Naive thymus-derived CD4-positive, alpha-beta T cell (primary cell): ENCODE measurements at regions of chr1 and their contacts with region 1.

Region 1: DNA sequence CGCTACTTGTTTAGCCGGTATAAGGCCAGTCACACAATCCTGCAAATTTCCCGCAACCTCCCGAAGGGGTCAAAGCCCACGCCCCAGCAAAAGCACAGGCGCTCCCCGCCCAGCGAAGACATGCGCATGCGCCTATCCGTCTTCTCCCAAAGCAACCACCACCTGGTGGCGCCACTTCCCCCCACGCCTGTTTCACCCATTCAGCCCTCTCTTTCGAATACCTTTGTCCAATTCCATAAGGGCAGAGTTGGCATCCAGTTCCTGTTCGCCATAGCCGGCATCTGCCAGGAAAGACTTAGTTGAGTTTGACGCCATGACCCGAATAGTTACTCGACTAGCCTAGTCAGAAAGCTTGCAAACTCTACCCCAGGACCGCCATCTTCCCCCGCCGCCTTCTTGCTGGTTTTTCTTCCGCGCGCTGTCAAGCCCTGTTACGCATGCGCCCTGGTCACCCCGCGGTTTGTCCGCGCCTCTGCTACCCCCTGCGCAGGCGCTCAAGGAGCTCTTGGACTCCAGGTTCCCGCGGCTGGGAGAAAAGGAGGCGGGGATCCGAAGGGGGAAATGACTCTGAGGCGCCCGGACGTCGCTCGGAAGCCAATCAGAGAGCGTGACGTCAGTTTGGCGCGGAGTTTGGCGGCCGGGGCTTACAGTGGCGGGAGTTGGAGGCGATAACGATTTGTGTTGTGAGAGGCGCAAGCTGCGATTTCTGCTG is at the starts of genes DTL and INTS7:
- DNase-seq: peak; percentile 94 to 99 (median 99)
- ATAC-seq: peak; percentile 93
- H3K4me3 ChIP-seq: peak within 1 kb of the TSS; percentile 99
- H3K4me3 Mint-ChIP-seq: peak within 1 kb of the TSS; percentile 86 to 100 (median 98)
- H3K27ac ChIP-seq: peak within 1 kb of the TSS; percentile 70
- H3K27ac Mint-ChIP-seq: peak within 1 kb of the TSS; percentile 95 to 99 (median 98)
- H3K4me1 ChIP-seq: peaks cover 20 to 23% of the 10 kb centered on the region in 2 donors
- H3K4me1 Mint-ChIP-seq: peaks cover 18 to 68% (median 54%) of the 10 kb centered on the region in 7 donors
- H3K27me3 ChIP-seq: no peaks in the 10 kb centered on the region
- H3K27me3 Mint-ChIP-seq: peaks cover 0 to 5% (median 0%) of the 10 kb centered on the region in 5 donors
- total RNA-seq, gene DTL: 0.27 to 63.0 (median 0.78) TPM
- total RNA-seq, gene INTS7: 7.3 to 33.5 (median 8.6) TPM

Region 2: GRCh38 chr1:211675230-211676105 is 359.8 kb before region 1 on chr1 and contains the start of gene NEK2:
- CTCF ChIA-PET with region 1: interaction called, 6 read pairs
- POLR2A ChIA-PET with region 1: no interaction called
- intact Hi-C with region 1: loop called (anchors 1 kb)
- DNase-seq: peak; percentile 53 to 90 (median 85)
- ATAC-seq: peak; percentile 97
- H3K4me3 ChIP-seq: peak within 1 kb of the TSS; percentile 76
- H3K4me3 Mint-ChIP-seq: peak within 1 kb of the TSS; percentile 88 to 96 (median 92)
- H3K27ac ChIP-seq: peak within 1 kb of the TSS; percentile 56
- H3K27ac Mint-ChIP-seq: peak within 1 kb of the TSS; percentile 45 to 88 (median 80)
- H3K4me1 ChIP-seq: peaks cover 5 to 7% of the 10 kb centered on the region in 2 donors
- H3K4me1 Mint-ChIP-seq: peaks cover 8 to 38% (median 13%) of the 10 kb centered on the region in 7 donors
- H3K27me3 ChIP-seq: no peaks in the 10 kb centered on the region
- H3K27me3 Mint-ChIP-seq: no peaks in the 10 kb centered on the region
- total RNA-seq, gene NEK2: 0.16 to 26.5 (median 0.25) TPM in 4 of 5 experiments, not detected in the other

Region 3: DNA sequence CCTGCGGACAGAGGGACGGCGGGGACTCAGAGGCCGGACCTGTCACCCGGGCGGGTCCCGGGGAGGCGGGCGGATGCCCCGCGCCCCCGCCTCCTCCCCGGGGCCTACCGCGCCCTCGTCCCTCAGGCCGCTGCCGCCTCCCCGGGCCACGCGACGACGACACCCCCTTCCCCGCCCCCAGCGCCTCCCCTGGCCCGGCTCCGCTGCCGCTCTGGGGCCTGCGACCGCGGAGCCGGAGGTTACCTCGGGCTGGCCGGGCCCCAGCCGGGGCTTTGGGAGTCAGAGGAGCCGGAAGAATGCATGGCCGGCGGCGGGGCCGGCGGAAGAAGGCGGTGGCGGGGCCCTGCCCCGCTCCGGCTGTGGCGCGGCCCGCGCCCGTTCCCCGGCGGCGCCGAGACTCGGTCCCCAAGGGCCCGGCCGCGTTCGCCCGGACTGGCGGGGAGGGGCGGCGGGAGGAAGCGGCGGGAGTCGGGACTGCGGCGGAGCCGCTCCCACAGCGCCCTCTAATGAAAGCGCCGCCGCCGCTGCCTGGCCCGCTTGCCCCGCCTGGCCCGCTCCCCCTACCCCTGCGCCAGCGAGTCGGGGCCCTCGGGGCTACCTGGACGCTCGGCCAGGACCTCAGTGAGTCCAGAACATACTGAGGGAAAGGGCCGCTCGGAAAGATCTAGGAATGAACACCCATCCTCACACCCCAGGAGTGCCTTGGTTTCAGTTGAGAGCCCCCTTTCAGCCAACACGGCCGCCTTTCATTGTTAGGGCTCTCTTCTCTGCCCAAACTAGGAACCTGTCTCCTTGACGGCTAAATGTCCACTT is 204.7 kb before region 1 on chr1 and contains the start of gene LPGAT1:
- CTCF ChIA-PET with region 1: no interaction called
- POLR2A ChIA-PET with region 1: no interaction called
- intact Hi-C with region 1: loop called (anchors 1 to 5 kb)
- DNase-seq: peak; percentile 28 to 81 (median 54)
- ATAC-seq: peak; percentile 92
- H3K4me3 ChIP-seq: peak within 1 kb of the TSS; percentile 68
- H3K4me3 Mint-ChIP-seq: peak within 1 kb of the TSS; percentile 88 to 97 (median 90)
- H3K27ac ChIP-seq: peak within 1 kb of the TSS; percentile 64
- H3K27ac Mint-ChIP-seq: peak within 1 kb of the TSS; percentile 60 to 94 (median 85)
- H3K4me1 ChIP-seq: peaks cover 20 to 40% of the 10 kb centered on the region in 2 donors
- H3K4me1 Mint-ChIP-seq: peaks cover 34 to 69% (median 64%) of the 10 kb centered on the region in 7 donors
- H3K27me3 ChIP-seq: no peaks in the 10 kb centered on the region
- H3K27me3 Mint-ChIP-seq: peaks cover 0 to 3% (median 0%) of the 10 kb centered on the region in 5 donors
- total RNA-seq, gene LPGAT1: 11.7 to 76.1 (median 19.3) TPM

Region 4: DNA sequence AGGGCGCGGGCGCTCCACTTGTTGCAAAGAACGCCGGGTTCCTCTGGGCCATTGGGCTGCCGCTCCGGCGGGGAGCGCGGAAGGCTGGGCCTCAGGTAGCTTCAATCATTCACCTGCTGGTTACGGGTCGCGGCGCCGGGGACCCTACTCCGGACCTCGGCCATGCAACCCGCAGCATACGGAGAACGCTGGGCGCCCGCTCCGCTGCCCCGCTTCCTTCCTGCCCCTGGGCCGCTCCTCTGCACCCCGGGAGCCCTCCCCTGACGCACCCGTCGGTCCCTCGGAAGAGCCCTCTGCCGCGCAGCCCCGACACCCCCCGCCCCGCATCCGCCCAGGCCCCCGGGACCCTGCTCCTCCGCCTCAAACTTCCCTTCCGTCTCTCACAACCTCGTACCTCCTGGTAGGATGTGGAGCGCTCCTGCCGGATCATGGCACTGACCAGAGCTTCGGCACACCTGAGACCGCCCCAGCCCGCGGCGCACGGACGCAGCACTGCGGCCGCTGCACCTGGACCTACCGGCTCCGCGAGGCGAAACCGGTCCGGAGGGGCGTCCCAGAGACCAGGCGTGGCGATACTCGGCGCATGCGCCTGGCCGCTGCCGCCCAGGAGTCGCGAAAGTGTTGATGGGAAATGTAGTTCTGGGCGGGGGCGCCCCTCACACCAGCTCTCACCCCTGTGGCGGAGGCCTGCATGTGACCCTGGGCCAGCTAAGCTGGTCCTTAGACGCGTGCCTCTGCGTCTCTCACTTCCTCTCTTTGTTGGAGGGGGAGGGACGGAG is 379.2 kb after region 1 on chr1 and contains the start of gene PACC1:
- CTCF ChIA-PET with region 1: no interaction called
- POLR2A ChIA-PET with region 1: no interaction called
- intact Hi-C with region 1: loop called (anchors 1 kb)
- DNase-seq: peak; percentile 77 to 89 (median 86)
- ATAC-seq: peak; percentile 98
- H3K4me3 ChIP-seq: peak within 1 kb of the TSS; percentile 98
- H3K4me3 Mint-ChIP-seq: peak within 1 kb of the TSS; percentile 87 to 100 (median 94)
- H3K27ac ChIP-seq: peak within 1 kb of the TSS; percentile 71
- H3K27ac Mint-ChIP-seq: peak within 1 kb of the TSS; percentile 74 to 94 (median 89)
- H3K4me1 ChIP-seq: peaks cover 15 to 19% of the 10 kb centered on the region in 2 donors
- H3K4me1 Mint-ChIP-seq: peaks cover 22 to 46% (median 40%) of the 10 kb centered on the region in 7 donors
- H3K27me3 ChIP-seq: no peaks in the 10 kb centered on the region
- H3K27me3 Mint-ChIP-seq: no peaks in the 10 kb centered on the region
- total RNA-seq, gene PACC1: 7.9 to 13.4 (median 12.0) TPM

Region 5: GRCh38 chr1:212558693-212559480 is 523.6 kb after region 1 on chr1:
- CTCF ChIA-PET with region 1: no interaction called
- POLR2A ChIA-PET with region 1: no interaction called
- intact Hi-C with region 1: loop called (anchors 1 to 10 kb)
- DNase-seq: peak; percentile 83 to 93 (median 91)
- ATAC-seq: peak; percentile 97
- H3K4me3 ChIP-seq: peak overlapping the region; percentile 54
- H3K4me3 Mint-ChIP-seq: peak overlapping the region; percentile 82 to 95 (median 90)
- H3K27ac ChIP-seq: peak overlapping the region; percentile 74
- H3K27ac Mint-ChIP-seq: peak overlapping the region; percentile 91 to 99 (median 98)
- H3K4me1 ChIP-seq: peaks cover 7 to 13% of the 10 kb centered on the region in 2 donors
- H3K4me1 Mint-ChIP-seq: peaks cover 6 to 15% (median 9%) of the 10 kb centered on the region in 7 donors
- H3K27me3 ChIP-seq: no peaks in the 10 kb centered on the region
- H3K27me3 Mint-ChIP-seq: peaks cover 0 to 45% (median 0%) of the 10 kb centered on the region in 5 donors

Region 6: GRCh38 chr1:212791676-212792395 is 756.6 kb after region 1 on chr1 and contains the starts of genes NSL1 and TATDN3:
- CTCF ChIA-PET with region 1: no interaction called
- POLR2A ChIA-PET with region 1: no interaction called
- intact Hi-C with region 1: loop called (anchors 1 to 5 kb)
- DNase-seq: peak; percentile 82 to 99 (median 92)
- ATAC-seq: peak; percentile 98
- H3K4me3 ChIP-seq: peak within 1 kb of the TSS; percentile 100
- H3K4me3 Mint-ChIP-seq: peak within 1 kb of the TSS; percentile 86 to 98 (median 95)
- H3K27ac ChIP-seq: peak within 1 kb of the TSS; percentile 83
- H3K27ac Mint-ChIP-seq: peak within 1 kb of the TSS; percentile 87 to 99 (median 96)
- H3K4me1 ChIP-seq: peaks cover 17 to 19% of the 10 kb centered on the region in 2 donors
- H3K4me1 Mint-ChIP-seq: peaks cover 27 to 58% (median 43%) of the 10 kb centered on the region in 7 donors
- H3K27me3 ChIP-seq: no peaks in the 10 kb centered on the region
- H3K27me3 Mint-ChIP-seq: no peaks in the 10 kb centered on the region
- total RNA-seq, gene NSL1: 22.3 to 42.3 (median 37.7) TPM
- total RNA-seq, gene TATDN3: 10.0 to 17.7 (median 13.9) TPM

Region 7: GRCh38 chr1:213051127-213051880 is 1016.0 kb after region 1 on chr1 and contains the start of gene RPS6KC1:
- CTCF ChIA-PET with region 1: no interaction called
- POLR2A ChIA-PET with region 1: no interaction called
- intact Hi-C with region 1: loop called in 1 of 2 experiments (anchors 1 kb)
- DNase-seq: peak; percentile 64 to 82 (median 79)
- ATAC-seq: peak; percentile 97
- H3K4me3 ChIP-seq: peak within 1 kb of the TSS; percentile 97
- H3K4me3 Mint-ChIP-seq: peak within 1 kb of the TSS; percentile 93 to 99 (median 96)
- H3K27ac ChIP-seq: peak within 1 kb of the TSS; percentile 72
- H3K27ac Mint-ChIP-seq: peak within 1 kb of the TSS; percentile 75 to 98 (median 93)
- H3K4me1 ChIP-seq: peaks cover 0 to 13% of the 10 kb centered on the region in 2 donors
- H3K4me1 Mint-ChIP-seq: peaks cover 23 to 39% (median 35%) of the 10 kb centered on the region in 7 donors
- H3K27me3 ChIP-seq: peaks cover 0 to 4% of the 10 kb centered on the region in 2 donors
- H3K27me3 Mint-ChIP-seq: peaks cover 9 to 27% (median 23%) of the 10 kb centered on the region in 5 donors
- total RNA-seq, gene RPS6KC1: 9.1 to 18.9 (median 14.3) TPM